ENCODE measurements at regions of chr6 and their contacts with region 1.

Region 1: GRCh38 chr6:132978685-132979084 is 164.3 kb downstream of the RPS12 start:
- DNase-seq: no peak
- ATAC-seq: no peak
- H3K4me3 ChIP-seq: no peak overlapping the region
- H3K27ac ChIP-seq: no peak overlapping the region
- H3K4me1 ChIP-seq: no peaks in the 10 kb centered on the region
- H3K27me3 ChIP-seq: no peaks in the 10 kb centered on the region
- CTCF ChIP-seq: no peak
- EP300 ChIP-seq: no peak
- POLR2A ChIP-seq: no peak
- RAD21 ChIP-seq: no peak

Region 2: GRCh38 chr6:133099573-133099972 is 120.9 kb after region 1 on chr6:
- CTCF ChIA-PET with region 1: no interaction called
- POLR2A ChIA-PET with region 1: no interaction called
- in situ Hi-C with region 1: no loop called
- intact Hi-C with region 1: loop called (anchors 5 kb)
- DNase-seq: no peak
- ATAC-seq: no peak
- H3K4me3 ChIP-seq: no peak overlapping the region
- H3K27ac ChIP-seq: no peak overlapping the region
- H3K4me1 ChIP-seq: no peaks in the 10 kb centered on the region
- H3K27me3 ChIP-seq: no peaks in the 10 kb centered on the region
- CTCF ChIP-seq: no peak
- EP300 ChIP-seq: no peak
- POLR2A ChIP-seq: no peak
- RAD21 ChIP-seq: no peak

Measured in K562 (cell line).